Vagina (tissue), 2 donors: ENCODE measurements at regions of chr1 and their contacts with region 1.

Region 1: DNA sequence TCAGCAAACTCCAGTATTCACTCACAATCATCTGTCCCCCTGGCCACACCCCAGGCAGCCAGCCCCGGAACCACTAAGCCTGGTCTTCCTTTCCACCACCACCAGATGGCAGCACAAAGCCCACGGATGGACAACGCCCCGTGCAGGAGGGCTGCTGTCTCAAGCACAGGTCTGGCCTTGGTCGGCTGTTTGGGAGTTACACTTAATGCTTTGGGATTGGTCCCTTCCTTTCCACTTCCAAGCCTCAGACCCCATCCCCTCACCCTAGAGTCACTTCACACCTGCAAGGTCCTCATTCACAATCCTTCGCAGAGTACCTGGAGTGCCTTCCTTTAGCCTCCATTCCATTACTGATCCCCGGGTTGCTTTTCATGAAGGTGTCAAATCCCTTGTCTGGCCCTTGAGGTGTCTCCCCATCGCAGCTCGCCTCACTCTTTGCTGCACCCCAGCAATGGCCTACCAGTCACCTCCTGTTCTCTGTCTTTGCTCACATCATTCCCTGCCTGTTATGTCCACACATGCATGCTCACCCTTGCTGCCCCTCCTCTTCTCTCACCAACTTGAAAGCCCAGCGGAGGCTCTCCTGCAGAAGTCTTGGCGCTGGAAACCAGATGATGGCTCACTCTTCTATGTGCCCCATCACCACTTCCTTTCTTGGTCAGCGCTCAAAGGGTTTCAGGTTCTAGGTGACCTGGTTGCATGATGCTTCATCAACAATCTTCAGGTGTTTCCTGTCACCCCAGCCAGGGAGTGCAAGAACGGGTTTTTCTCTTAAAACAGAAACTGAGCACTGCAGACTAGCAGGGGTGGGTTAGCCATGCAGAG is 24.9 kb upstream of the KCNA2 start:
- DNase-seq: peak; percentile 85 to 94
- H3K4me3 ChIP-seq: no peak overlapping the region
- H3K27ac ChIP-seq: no peak overlapping the region
- H3K4me1 ChIP-seq: peaks cover 20% of the 10 kb centered on the region
- H3K27me3 ChIP-seq: no peaks in the 10 kb centered on the region
- CTCF ChIP-seq: peak; percentile 77 to 93 (median 88)
- POLR2A ChIP-seq: no peak

Region 2: GRCh38 chr1:110766025-110766647 is 135.1 kb after region 1 on chr1:
- intact Hi-C with region 1: loop called (anchors 5 kb)
- DNase-seq: no peak
- H3K4me3 ChIP-seq: no peak overlapping the region
- H3K27ac ChIP-seq: no peak overlapping the region
- H3K4me1 ChIP-seq: no peaks in the 10 kb centered on the region
- H3K27me3 ChIP-seq: no peaks in the 10 kb centered on the region
- CTCF ChIP-seq: peak; percentile 63 to 80 (median 73)
- POLR2A ChIP-seq: no peak